ENCODE measurements at regions of chr1 and their contacts with region 1.

Region 1: GRCh38 chr1:207069858-207070506 is 16.9 kb downstream of the PFKFB2 start:
- DNase-seq: no peak
- ATAC-seq: no peak
- H3K4me3 ChIP-seq: no peak overlapping the region
- H3K27ac ChIP-seq: no peak overlapping the region
- H3K4me1 ChIP-seq: peaks cover 10% of the 10 kb centered on the region
- CTCF ChIP-seq: no peak
- EP300 ChIP-seq: no peak
- POLR2A ChIP-seq: no peak
- RAD21 ChIP-seq: no peak

Region 2: DNA sequence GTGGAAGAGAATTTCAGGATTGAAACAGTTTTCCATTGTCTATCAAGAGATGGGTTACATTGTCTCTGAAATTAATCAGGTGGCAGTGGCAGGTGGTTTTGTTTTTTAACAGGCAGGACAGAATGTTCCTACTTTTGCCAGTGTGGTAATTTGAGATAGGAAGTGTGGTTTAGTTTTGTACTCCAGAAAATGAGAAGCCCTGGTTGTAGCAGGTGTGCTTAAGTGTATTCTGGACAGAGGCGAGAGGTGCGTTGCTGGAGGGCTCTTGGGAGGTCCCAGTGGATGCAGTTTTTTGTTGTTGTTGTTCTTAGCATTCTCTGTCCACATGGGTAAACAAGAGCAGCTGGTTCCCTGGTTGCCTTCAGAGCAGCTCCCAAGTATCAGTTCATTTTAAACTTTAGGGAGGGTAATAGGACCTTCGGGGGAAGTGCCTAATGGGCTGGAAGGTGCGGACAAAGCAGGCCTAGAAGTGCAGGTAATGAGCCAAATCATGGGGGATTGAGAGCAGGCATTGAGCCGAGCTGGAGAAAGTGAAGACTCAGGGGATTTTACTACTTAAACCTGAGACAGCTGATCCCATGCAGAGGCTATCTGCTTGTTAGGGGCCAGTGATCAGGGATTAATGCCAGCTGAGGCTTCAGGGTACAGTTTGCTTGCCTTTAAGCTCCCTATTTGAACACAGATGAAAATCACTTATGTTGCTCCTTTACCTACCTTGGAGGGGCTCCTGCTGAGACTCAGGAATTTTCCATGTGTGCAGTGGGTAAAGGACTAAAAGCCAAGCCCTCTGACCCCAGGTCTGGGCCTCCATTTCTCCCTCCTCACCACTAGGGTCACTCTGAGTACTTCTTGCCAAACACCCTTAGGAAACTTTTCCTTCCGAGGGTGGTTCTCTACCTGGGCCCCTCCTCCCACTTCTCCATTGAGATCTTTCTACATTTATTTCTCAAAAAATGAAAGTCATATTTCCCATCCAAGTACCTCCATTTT is 10.8 kb before region 1 on chr1:
- CTCF ChIA-PET with region 1: interaction called, 11 read pairs
- POLR2A ChIA-PET with region 1: no interaction called
- DNase-seq: no peak
- ATAC-seq: peak in 1 of 2 experiments; percentile 75; a peak in 4 of 6 replicates
- H3K4me3 ChIP-seq: no peak overlapping the region
- H3K27ac ChIP-seq: no peak overlapping the region
- H3K4me1 ChIP-seq: no peaks in the 10 kb centered on the region
- CTCF ChIP-seq: no peak
- EP300 ChIP-seq: no peak
- POLR2A ChIP-seq: no peak
- RAD21 ChIP-seq: no peak

Region 3: DNA sequence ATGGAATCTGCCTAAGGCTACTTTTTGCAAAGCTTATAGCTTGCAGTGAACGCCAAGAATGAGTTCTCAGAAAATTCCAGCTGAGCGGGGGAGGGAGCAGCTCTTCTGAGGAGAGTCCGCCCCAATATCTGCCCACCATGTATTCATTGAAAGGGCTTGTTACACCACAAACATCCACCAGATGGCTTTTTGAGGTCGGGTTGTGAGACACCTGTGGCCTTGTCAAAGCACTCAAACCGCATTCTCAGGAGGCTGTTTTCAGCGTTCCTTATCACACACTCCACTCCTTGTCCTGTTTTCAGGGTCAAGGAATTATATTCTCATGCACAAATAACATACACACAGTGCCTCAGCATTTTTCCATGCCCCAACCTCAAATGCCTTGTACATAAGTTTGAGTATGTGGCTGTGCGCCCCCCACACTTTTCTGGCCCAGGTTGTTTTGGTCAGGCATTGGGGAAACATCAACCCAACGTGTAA is 14.8 kb after region 1 on chr1:
- CTCF ChIA-PET with region 1: interaction called, 14 read pairs
- POLR2A ChIA-PET with region 1: no interaction called
- DNase-seq: peak; percentile 71 to 75
- ATAC-seq: peak; percentile 84 to 93
- H3K4me3 ChIP-seq: no peak overlapping the region
- H3K27ac ChIP-seq: no peak overlapping the region
- H3K4me1 ChIP-seq: peaks cover 43% of the 10 kb centered on the region
- CTCF ChIP-seq: peak; percentile 66
- EP300 ChIP-seq: no peak
- POLR2A ChIP-seq: no peak
- RAD21 ChIP-seq: peak; percentile 77 to 85